ENCODE measurements at regions of chr20 and their contacts with region 1.

Region 1: GRCh38 chr20:57596998-57597939 is 23.0 kb downstream of the ZBP1 start:
- DNase-seq: peak; percentile 17
- H3K4me3 ChIP-seq: no peak overlapping the region
- H3K27ac ChIP-seq: no peak overlapping the region
- H3K4me1 ChIP-seq: no peaks in the 10 kb centered on the region
- H3K27me3 ChIP-seq: peaks cover 2% of the 10 kb centered on the region in 2 experiments
- CTCF ChIP-seq: peak; percentile 88 to 94
- POLR2A ChIP-seq: no peak

Region 2: GRCh38 chr20:57383447-57384347 is 213.6 kb before region 1 on chr20:
- CTCF ChIA-PET with region 1: interaction called, 3 read pairs
- POLR2A ChIA-PET with region 1: no interaction called
- dilution Hi-C with region 1: no loop called
- intact Hi-C with region 1: loop called (anchors 5 kb)
- DNase-seq: no peak
- H3K4me3 ChIP-seq: no peak overlapping the region
- H3K27ac ChIP-seq: no peak overlapping the region
- H3K4me1 ChIP-seq: no peaks in the 10 kb centered on the region
- H3K27me3 ChIP-seq: no peaks in the 10 kb centered on the region
- CTCF ChIP-seq: no peak
- POLR2A ChIP-seq: no peak

Region 3: GRCh38 chr20:57514273-57514751 is 83.0 kb before region 1 on chr20:
- CTCF ChIA-PET with region 1: interaction called, 38 read pairs
- POLR2A ChIA-PET with region 1: no interaction called
- dilution Hi-C with region 1: no loop called
- intact Hi-C with region 1: loop called (anchors 1 kb)
- DNase-seq: peak; percentile 68
- H3K4me3 ChIP-seq: no peak overlapping the region
- H3K27ac ChIP-seq: no peak overlapping the region
- H3K4me1 ChIP-seq: no peaks in the 10 kb centered on the region
- H3K27me3 ChIP-seq: no peaks in the 10 kb centered on the region
- CTCF ChIP-seq: peak; percentile 53 to 63
- POLR2A ChIP-seq: no peak

Region 4: DNA sequence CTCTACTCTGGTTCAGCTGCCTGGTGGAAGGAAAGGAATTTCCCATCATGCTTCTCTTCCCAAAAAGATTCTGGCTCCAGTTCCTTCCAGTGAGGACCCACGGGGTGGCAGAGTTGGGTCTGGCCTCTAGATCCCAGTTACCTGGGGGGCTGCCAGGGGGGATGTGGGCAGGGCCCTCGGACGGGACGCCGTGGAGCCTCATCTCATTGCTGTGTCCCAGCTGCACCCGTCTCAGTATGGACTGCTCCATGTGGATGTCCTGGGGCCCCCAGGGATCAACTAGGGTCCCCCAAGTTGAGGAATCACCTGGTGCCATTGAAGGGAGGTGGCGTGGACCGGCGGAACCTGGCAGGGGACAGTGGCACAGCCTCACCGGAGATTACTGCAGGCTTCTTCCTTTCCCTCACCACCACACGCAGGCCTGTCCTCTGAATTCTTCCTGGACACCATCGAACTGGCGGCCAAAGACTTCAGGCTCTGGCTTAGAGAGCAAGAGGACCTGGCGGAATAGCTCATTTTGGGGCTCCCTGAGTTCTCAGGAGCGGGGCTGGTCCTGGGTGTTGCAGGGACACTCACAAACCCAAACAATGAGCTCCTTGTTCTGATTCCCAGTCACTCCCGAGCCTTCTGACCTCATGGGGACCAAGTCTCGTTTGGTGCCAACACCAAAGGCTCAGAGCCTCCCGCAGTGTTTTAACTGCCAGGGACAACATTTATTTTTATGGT is 14.5 kb after region 1 on chr20:
- CTCF ChIA-PET with region 1: no interaction called
- POLR2A ChIA-PET with region 1: no interaction called
- dilution Hi-C with region 1: no loop called
- intact Hi-C with region 1: no loop called
- DNase-seq: no peak
- H3K4me3 ChIP-seq: no peak overlapping the region
- H3K27ac ChIP-seq: no peak overlapping the region
- H3K4me1 ChIP-seq: no peaks in the 10 kb centered on the region
- H3K27me3 ChIP-seq: no peaks in the 10 kb centered on the region
- CTCF ChIP-seq: no peak
- POLR2A ChIP-seq: no peak

Region 5: GRCh38 chr20:58179432-58180099 is 582.3 kb after region 1 on chr20:
- CTCF ChIA-PET with region 1: interaction called, 52 read pairs
- POLR2A ChIA-PET with region 1: no interaction called
- dilution Hi-C with region 1: no loop called
- intact Hi-C with region 1: loop called (anchors 1 kb)
- DNase-seq: peak; percentile 30
- H3K4me3 ChIP-seq: no peak overlapping the region
- H3K27ac ChIP-seq: no peak overlapping the region
- H3K4me1 ChIP-seq: no peaks in the 10 kb centered on the region
- H3K27me3 ChIP-seq: peaks cover 3 to 6% of the 10 kb centered on the region in 2 experiments
- CTCF ChIP-seq: peak; percentile 95 to 97
- POLR2A ChIP-seq: no peak

Region 6: GRCh38 chr20:58209652-58210397 is 612.6 kb after region 1 on chr20:
- CTCF ChIA-PET with region 1: interaction called, 54 read pairs
- POLR2A ChIA-PET with region 1: no interaction called
- dilution Hi-C with region 1: no loop called
- intact Hi-C with region 1: loop called (anchors 1 kb)
- DNase-seq: peak; percentile 70
- H3K4me3 ChIP-seq: no peak overlapping the region
- H3K27ac ChIP-seq: no peak overlapping the region
- H3K4me1 ChIP-seq: no peaks in the 10 kb centered on the region
- H3K27me3 ChIP-seq: no peaks in the 10 kb centered on the region
- CTCF ChIP-seq: peak; percentile 100
- POLR2A ChIP-seq: no peak